ENCODE measurements at regions of chr19 and their contacts with region 1.

Region 1: DNA sequence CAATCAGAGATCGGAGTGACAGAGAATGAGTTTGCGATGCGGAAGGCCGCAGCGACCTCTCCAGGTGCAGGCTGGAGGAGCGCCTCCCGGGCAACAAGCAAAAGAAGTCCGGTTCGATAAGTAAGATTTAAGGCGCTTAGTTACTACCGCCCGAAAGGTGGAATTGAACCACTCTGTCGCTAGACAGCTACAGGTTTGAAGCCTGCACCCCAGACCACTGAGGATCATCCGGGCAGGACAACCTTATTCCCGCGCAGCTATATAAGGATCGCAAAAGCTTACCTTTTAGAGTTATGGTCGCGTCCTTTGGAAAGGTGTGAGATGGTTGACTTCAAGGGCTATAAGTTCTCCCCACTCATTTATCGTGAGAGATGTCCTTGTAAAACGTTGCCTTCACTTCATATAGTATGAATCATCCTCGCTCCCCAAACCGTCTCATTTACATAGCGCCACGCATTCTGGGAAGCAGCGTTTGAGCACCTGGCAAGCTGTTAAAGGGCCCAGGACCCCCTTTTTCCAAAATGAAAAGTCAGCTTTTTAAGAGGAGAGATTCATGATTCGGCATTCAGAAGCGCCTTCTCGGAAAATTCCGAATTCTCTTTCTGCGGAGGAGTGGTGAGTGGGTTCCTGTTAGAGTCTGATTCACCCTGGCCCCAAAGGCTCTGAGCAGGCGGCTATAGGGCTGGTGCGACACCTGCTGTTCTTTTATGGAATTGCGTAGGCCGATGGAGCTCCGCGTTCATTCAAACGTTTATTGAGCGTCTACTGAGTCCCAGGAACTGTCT is 10.8 kb downstream of the FOSB start:
- H3K4me3 ChIP-seq: peak overlapping the region; percentile 52
- H3K27ac ChIP-seq: peak overlapping the region; percentile 98
- H3K4me1 ChIP-seq: no peaks in the 10 kb centered on the region
- CTCF ChIP-seq: peak; percentile 95

Region 2: DNA sequence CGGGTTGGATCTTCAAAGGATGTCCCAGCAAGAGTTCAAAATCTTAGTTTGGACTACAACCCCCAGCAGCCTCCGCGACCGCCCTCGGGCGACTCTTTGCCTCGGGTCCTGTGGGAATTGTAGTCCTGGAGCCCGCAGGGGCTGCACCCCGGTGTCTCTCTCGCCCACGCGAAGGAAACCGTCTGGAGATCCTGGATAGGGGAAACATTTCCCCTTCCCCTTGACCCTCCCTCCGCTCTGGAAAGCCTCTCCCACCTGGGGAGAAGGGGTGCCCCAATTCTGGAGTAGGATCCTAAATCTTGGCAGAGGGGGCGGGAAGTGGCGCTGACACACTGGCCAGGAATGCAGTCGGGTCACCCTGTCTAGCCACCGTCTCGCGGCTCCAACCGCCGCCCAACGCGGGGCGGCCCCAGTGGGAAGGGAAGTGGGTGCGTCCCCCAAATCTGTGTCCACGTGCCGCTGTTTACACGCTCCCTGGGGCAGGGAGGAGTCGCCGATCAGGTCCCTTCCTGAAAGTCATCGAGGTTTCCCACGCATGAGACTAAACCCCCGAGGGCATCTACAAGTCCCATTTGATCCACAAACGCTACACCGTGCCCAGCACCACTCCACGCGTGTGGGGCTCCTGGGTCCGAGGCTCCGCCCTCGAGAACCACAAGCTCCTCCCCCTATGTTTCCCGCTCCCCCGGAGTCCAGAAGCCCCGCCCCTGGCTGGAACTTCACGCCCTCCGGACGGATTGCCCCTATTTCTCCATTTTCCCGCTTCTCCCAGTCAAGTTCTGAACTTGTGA is 73.0 kb before region 1 on chr19:
- CTCF ChIA-PET with region 1: interaction called, 42 read pairs
- POLR2A ChIA-PET with region 1: interaction called, 5 read pairs
- H3K4me3 ChIP-seq: peak overlapping the region; percentile 82
- H3K27ac ChIP-seq: peak overlapping the region; percentile 96
- H3K4me1 ChIP-seq: 0 out of 2 replicates have a peak, but pooled peaks cover 7% of the 10 kb centered on the region
- CTCF ChIP-seq: no peak

Region 3: GRCh38 chr19:45423589-45424190 is 55.0 kb before region 1 on chr19 and contains the start of gene ERCC1:
- CTCF ChIA-PET with region 1: interaction called, 27 read pairs
- POLR2A ChIA-PET with region 1: interaction called, 4 read pairs
- H3K4me3 ChIP-seq: peak within 1 kb of the TSS; percentile 50
- H3K27ac ChIP-seq: peak within 1 kb of the TSS; percentile 88
- H3K4me1 ChIP-seq: peaks cover 10% of the 10 kb centered on the region
- CTCF ChIP-seq: no peak

Region 4: GRCh38 chr19:45446320-45446763 is 32.3 kb before region 1 on chr19:
- CTCF ChIA-PET with region 1: interaction called, 295 read pairs
- POLR2A ChIA-PET with region 1: interaction called, 7 read pairs
- H3K4me3 ChIP-seq: no peak overlapping the region
- H3K27ac ChIP-seq: no peak overlapping the region
- H3K4me1 ChIP-seq: 0 out of 2 replicates have a peak, but pooled peaks cover 8% of the 10 kb centered on the region
- CTCF ChIP-seq: no peak; the same call in 1 of the 2 replicates

Region 5: DNA sequence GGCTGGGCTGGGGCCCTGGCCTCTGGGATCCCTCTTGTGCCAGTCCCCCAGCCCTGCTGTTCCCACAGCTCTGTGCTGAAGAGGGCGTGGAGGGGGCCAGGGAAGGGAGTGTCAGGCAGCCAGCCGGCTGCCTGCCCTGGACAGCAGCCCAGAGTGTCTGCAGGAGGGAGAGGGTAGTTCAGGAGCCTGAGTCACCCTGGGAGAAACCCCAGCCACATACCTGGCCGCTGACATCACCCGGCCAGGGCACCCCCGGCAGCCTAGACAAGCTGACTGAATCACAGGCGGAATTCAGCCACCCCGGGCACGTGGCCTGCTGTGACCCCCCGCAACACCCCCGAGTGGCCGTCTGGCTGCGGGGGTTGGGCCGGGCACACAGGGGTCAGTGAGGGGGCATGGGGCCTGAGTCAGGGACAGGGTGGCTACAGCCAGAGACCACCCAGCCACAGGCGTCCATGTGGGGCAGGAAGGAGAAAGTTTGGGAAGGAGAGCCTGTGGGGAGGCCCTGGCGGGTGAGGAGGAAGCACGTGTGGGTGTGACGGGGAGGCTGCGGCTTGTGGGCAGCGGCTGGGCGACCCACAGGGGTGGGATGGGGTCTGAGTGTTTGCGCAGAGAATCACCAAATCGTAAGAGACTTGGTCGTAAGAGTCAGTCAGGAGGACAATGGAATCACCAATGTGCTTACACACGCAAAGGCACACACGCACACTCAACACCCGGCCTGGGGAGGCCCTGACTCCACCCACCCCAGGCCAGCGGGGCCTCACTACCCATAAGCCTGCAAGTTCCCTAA is 22.7 kb before region 1 on chr19:
- CTCF ChIA-PET with region 1: interaction called, 20 read pairs
- POLR2A ChIA-PET with region 1: interaction called, 9 read pairs
- H3K4me3 ChIP-seq: peak overlapping the region; percentile 23
- H3K27ac ChIP-seq: 0 out of 2 replicates have a peak overlapping the region, but pooled peaks have one; percentile 11
- H3K4me1 ChIP-seq: peaks cover 7% of the 10 kb centered on the region; the same call in 1 of the 2 replicates
- CTCF ChIP-seq: no peak

Region 6: DNA sequence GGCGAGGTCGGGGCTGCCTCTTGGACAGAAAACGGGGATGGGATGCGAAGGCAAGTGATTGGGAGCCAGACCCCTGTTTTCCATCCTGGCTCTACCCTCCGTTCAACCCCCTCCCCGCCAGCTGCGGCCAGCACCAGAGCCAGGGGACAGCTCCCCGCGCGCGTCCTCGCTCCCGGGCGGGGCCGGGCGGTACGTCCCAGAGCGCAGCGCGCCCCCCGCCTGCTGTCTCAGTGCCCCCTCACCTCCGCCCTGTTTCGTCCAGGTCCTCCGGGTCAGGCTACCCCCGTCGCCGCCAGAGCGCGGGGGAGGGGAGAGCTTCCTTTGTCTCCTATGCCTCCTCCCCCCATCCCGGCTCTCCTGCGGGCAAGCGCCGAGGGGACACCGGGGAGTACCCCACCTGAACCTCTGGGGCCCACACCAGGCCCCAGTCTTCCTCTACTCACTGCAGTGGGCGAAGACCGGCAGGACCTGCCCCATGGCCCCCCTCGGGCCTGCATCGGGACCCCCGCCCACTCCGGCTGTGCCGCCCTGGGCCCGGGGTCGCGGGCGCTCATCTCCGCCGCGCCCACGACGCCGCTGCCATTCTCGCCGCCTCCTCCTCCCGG is 17.8 kb after region 1 on chr19:
- CTCF ChIA-PET with region 1: interaction called, 21 read pairs
- POLR2A ChIA-PET with region 1: interaction called, 3 read pairs
- H3K4me3 ChIP-seq: peak overlapping the region; percentile 53
- H3K27ac ChIP-seq: no peak overlapping the region
- H3K4me1 ChIP-seq: peaks cover 6% of the 10 kb centered on the region
- CTCF ChIP-seq: no peak

Measured in HEK293 (cell line).